Left ventricle myocardium superior (tissue), 1 donor: ENCODE measurements at regions of chr20 and their contacts with region 1.

Region 1: GRCh38 chr20:10412591-10413408 is 21.2 kb downstream of the MKKS start:
- DNase-seq: no peak
- ATAC-seq: no peak

Region 2: DNA sequence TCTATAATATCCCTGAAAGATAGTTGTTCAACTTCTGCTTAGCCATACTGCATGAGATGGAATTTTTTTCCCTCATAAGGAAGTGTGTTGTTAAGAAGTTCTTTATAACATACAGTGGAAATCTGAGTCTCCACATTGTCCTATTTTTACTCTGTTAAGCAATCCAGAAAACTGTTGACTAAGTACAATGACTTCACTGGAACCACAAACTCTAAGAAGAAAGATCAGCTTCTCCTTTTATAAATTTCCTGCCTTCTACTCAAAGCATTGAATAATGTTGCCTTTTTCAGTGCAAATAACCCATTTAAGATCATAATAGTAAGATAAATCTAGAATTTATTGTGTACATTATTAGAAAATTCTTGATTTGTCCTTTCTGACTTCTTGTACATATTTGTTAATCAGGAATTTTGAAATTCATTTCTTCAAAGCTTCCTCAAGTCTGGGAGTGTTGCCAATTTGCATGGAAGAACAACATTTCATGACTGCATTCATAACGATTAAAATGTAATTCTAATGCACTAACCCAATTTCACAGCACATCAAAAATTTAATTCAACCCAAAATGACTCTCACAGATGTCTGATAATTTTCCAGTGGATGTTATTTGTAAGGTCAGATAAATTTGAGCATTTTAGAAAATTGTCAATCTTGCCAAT is 423.6 kb before region 1 on chr20:
- intact Hi-C with region 1: loop called (anchors 10 kb)
- DNase-seq: no peak
- ATAC-seq: peak; percentile 57